ENCODE measurements at regions of chr1 and their contacts with region 1.

Region 1: DNA sequence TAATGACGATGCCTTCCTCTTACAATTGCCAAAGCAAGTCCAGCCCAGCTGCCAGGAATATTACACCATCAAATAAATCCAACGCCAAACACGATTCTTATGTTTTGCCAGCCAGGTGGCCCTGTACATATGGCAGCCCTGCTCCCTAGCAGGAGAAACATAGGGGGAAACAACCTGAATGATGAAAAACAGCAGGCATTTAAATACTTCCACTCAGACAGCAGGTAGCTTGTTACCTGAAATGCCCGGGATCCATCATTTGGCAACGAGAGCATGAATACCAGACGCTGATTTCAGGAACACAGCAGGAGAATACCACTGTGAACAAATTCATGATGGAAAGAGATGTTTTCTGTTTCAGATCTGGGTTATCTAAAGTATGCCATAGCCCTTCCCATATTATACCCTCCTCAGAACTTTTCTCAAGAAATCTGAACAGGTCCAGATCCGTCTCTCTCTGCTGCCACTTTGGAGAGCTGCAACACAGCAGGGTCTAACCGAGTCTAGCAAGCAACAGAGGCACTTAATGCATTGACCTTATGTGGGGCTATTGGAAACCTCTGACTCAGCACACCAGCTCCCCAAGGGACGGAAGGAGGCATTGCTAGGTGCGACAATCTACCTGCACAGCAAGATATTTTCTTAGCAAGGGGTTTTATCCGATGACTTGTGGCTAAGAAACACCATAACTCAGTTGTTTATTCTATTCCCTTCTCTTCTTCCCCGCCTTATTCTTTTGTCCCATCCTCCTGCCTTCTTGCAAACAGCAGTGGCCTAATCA is 166.3 kb downstream of the BARHL2 start:
- DNase-seq: no peak
- ATAC-seq: no peak
- H3K4me3 ChIP-seq: no peak overlapping the region
- H3K4me3 Mint-ChIP-seq: no peak overlapping the region
- H3K27ac ChIP-seq: no peak overlapping the region
- H3K27ac Mint-ChIP-seq: no peak overlapping the region
- H3K4me1 ChIP-seq: no peaks in the 10 kb centered on the region
- H3K4me1 Mint-ChIP-seq: no peaks in the 10 kb centered on the region
- H3K27me3 ChIP-seq: no peaks in the 10 kb centered on the region
- H3K27me3 Mint-ChIP-seq: peaks cover 19% of the 10 kb centered on the region
- CTCF ChIP-seq: no peak

Region 2: DNA sequence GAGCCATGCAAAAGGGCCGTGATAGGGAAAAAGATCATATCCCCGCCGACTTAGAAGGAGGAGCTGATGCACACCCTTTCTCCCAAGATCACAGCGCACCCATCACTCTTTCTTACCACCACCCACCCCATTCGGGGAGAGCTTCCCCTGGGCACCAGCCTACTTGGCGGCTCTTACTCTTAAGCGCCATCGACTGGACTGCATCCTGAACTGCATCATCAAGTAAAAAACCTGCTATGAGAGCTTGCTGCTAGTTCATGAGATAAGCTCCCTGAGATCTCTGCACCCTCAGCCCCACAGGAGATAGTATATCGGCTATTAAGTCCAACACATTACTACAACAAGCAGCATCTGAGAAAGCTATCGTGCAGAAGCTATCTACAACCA is 41.1 kb after region 1 on chr1:
- CTCF ChIA-PET with region 1: no interaction called
- POLR2A ChIA-PET with region 1: no interaction called
- intact Hi-C with region 1: loop called in 1 of 2 experiments (anchors 2 kb)
- DNase-seq: no peak
- ATAC-seq: no peak
- H3K4me3 ChIP-seq: no peak overlapping the region
- H3K4me3 Mint-ChIP-seq: no peak overlapping the region
- H3K27ac ChIP-seq: no peak overlapping the region
- H3K27ac Mint-ChIP-seq: no peak overlapping the region
- H3K4me1 ChIP-seq: no peaks in the 10 kb centered on the region
- H3K4me1 Mint-ChIP-seq: no peaks in the 10 kb centered on the region
- H3K27me3 ChIP-seq: peaks cover 0 to 2% of the 10 kb centered on the region in 2 experiments
- H3K27me3 Mint-ChIP-seq: peaks cover 23% of the 10 kb centered on the region
- CTCF ChIP-seq: no peak